CD8-positive, alpha-beta T cell (primary cell): ENCODE measurements at regions of chrX and their contacts with region 1.

Region 1: GRCh38 chrX:109536439-109537336 is at the start of gene NXT2:
- DNase-seq: peak; percentile 68 to 93 (median 84)
- ATAC-seq: peak; percentile 98
- H3K4me3 ChIP-seq: peak within 1 kb of the TSS; percentile 74 to 80
- H3K4me3 Mint-ChIP-seq: peak within 1 kb of the TSS; percentile 96
- H3K27ac ChIP-seq: peak within 1 kb of the TSS; percentile 72 to 91
- H3K27ac Mint-ChIP-seq: peak within 1 kb of the TSS; percentile 98
- H3K4me1 ChIP-seq: no peaks in the 10 kb centered on the region
- H3K4me1 Mint-ChIP-seq: peaks cover 17% of the 10 kb centered on the region
- H3K27me3 ChIP-seq: no peaks in the 10 kb centered on the region
- H3K27me3 Mint-ChIP-seq: peaks cover 13% of the 10 kb centered on the region
- CTCF ChIP-seq: no peak
- total RNA-seq, gene NXT2: 4.5 to 4.6 TPM

Region 2: GRCh38 chrX:110002300-110003166 is 465.8 kb after region 1 on chrX and contains the start of gene TMEM164:
- CTCF ChIA-PET with region 1: no interaction called
- POLR2A ChIA-PET with region 1: no interaction called
- intact Hi-C with region 1: loop called in 1 of 2 experiments (anchors 5 kb)
- DNase-seq: peak; percentile 60 to 89 (median 79)
- ATAC-seq: peak; percentile 79
- H3K4me3 ChIP-seq: peak within 1 kb of the TSS; percentile 67 to 69
- H3K4me3 Mint-ChIP-seq: peak within 1 kb of the TSS; percentile 89
- H3K27ac ChIP-seq: peak within 1 kb of the TSS; percentile 33 to 67
- H3K27ac Mint-ChIP-seq: peak within 1 kb of the TSS; percentile 92
- H3K4me1 ChIP-seq: peaks cover 9% of the 10 kb centered on the region
- H3K4me1 Mint-ChIP-seq: peaks cover 38% of the 10 kb centered on the region
- H3K27me3 ChIP-seq: no peaks in the 10 kb centered on the region
- H3K27me3 Mint-ChIP-seq: no peaks in the 10 kb centered on the region
- CTCF ChIP-seq: no peak
- total RNA-seq, gene TMEM164: 7.4 to 9.0 TPM